ENCODE measurements at regions of chr7 and their contacts with region 1.

Region 1: DNA sequence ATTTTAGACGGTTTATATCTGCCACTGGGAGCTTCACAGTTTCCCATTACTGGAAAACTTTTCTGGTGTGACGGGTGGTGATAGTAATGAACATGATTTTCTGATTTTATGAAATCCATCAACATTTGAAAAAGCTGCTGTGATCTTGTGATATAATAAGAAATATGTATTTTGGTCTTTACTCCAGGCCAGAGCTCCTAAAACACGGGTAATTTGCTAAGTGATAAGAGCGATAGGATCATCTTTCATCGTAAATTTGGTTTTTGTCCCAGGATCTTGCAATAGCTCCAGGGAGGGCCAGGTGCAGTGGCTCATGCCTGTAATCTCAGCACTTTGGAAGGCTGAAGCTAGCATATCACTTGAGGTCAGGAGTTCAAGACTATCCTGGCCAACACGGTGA is 10.8 kb upstream of the RNF216 start:
- DNase-seq: no peak
- ATAC-seq: no peak
- H3K4me3 ChIP-seq: no peak overlapping the region
- H3K4me3 Mint-ChIP-seq: no peak overlapping the region
- H3K27ac ChIP-seq: no peak overlapping the region
- H3K27ac Mint-ChIP-seq: no peak overlapping the region
- H3K4me1 ChIP-seq: no peaks in the 10 kb centered on the region
- H3K4me1 Mint-ChIP-seq: no peaks in the 10 kb centered on the region
- H3K27me3 ChIP-seq: no peaks in the 10 kb centered on the region
- H3K27me3 Mint-ChIP-seq: no peaks in the 10 kb centered on the region

Region 2: DNA sequence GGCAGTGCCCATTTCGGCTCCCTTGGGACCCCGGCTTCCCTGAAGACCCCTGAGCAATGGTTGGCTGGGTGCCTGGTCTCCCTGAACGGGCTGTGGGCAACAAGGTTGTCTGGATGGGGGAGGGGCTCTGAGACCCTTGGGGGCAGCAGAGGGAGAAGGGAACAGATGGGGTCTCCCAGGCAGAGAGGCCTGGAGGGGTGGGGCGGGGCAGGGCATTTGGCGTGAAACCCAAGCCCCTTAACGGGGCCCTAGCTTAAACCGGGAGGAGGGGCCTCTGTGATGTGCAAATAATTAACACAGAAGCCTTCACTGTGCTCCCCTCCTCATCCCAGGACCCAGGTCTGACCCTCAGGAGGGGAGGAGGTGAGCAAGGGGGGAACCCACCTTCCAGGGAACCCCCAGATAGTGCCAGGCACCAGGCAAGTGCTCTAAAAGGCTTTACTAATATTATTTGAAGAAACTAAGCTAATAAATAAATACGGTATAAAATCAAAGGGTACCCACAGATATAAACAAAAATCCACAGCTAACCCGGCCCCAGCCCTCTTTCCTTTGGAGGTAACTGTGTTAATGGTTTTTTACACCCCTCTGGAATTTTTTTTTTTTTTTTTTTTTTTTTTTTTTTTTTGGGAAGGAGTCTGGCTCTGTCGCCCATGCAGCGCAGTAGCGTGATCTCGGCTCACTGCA is 181.6 kb before region 1 on chr7:
- CTCF ChIA-PET with region 1: no interaction called
- POLR2A ChIA-PET with region 1: interaction called in 1 of 2 experiments, 18 read pairs
- DNase-seq: no peak
- ATAC-seq: no peak
- H3K4me3 ChIP-seq: no peak overlapping the region
- H3K4me3 Mint-ChIP-seq: no peak overlapping the region
- H3K27ac ChIP-seq: no peak overlapping the region
- H3K27ac Mint-ChIP-seq: no peak overlapping the region
- H3K4me1 ChIP-seq: peaks cover 0 to 8% of the 10 kb centered on the region in 2 experiments
- H3K4me1 Mint-ChIP-seq: peaks cover 0 to 10% (median 3%) of the 10 kb centered on the region in 3 donors
- H3K27me3 ChIP-seq: peaks cover 0 to 6% of the 10 kb centered on the region in 2 experiments
- H3K27me3 Mint-ChIP-seq: no peaks in the 10 kb centered on the region

Region 3: GRCh38 chr7:5665094-5666025 is 126.9 kb before region 1 on chr7:
- CTCF ChIA-PET with region 1: no interaction called
- POLR2A ChIA-PET with region 1: no interaction called
- DNase-seq: peak; percentile 17 to 86 (median 50)
- ATAC-seq: peak; percentile 68 to 83 (median 74)
- H3K4me3 ChIP-seq: no peak overlapping the region
- H3K4me3 Mint-ChIP-seq: no peak overlapping the region
- H3K27ac ChIP-seq: no peak overlapping the region
- H3K27ac Mint-ChIP-seq: peak overlapping the region in 1 of 2 donors; percentile 29
- H3K4me1 ChIP-seq: peaks cover 4 to 13% of the 10 kb centered on the region in 2 experiments
- H3K4me1 Mint-ChIP-seq: peaks cover 21 to 33% (median 26%) of the 10 kb centered on the region in 3 donors
- H3K27me3 ChIP-seq: no peaks in the 10 kb centered on the region
- H3K27me3 Mint-ChIP-seq: no peaks in the 10 kb centered on the region